Activated T-helper 2 cell treated with anti-CD3 and anti-CD28 coated beads, Interferon-gamma antibody, Interleukin-2, Interleukin-4, amounts not matched to agents 10 μg/mL and 5 μg/mL and 100 μg/mL, durations not matched to agents 14 hours and 24 hours and 36 hours (primary cell): ENCODE measurements at regions of chr9 and their contacts with region 1.

Region 1: DNA sequence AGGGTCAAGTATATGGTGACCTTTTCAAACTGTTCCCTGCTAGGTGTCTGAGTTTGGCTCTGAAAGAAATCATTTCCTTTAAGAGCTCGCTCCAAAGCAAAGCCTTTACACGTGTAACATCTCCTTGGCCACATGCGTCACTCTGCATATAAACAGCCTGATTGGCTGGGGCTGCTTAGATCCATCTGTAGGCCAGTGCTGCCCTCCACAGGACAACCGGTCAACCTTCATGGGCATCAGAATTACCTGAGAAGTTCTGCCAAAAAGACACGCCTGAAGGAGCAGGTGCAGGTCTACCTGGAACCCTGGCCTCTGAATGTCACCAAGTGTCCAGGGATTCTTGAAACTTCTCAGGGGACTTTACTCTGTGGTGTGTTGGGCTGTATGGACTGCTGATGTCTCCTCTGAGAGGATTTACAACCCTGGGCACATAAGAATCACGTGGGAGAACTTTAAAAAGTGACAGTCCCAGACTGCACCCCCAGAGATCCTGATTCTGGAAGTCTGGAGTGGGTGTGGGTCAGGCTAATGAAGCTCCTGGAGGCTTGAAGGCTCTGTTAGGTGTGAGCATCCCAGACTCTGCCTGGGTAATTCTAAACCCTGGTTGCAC is 497.6 kb downstream of the GADD45G start:
- DNase-seq: peak; percentile 75
- H3K4me3 Mint-ChIP-seq: no peak overlapping the region
- H3K27ac Mint-ChIP-seq: no peak overlapping the region
- H3K4me1 Mint-ChIP-seq: peaks cover 11% of the 10 kb centered on the region
- H3K27me3 Mint-ChIP-seq: peaks cover 3% of the 10 kb centered on the region

Region 2: DNA sequence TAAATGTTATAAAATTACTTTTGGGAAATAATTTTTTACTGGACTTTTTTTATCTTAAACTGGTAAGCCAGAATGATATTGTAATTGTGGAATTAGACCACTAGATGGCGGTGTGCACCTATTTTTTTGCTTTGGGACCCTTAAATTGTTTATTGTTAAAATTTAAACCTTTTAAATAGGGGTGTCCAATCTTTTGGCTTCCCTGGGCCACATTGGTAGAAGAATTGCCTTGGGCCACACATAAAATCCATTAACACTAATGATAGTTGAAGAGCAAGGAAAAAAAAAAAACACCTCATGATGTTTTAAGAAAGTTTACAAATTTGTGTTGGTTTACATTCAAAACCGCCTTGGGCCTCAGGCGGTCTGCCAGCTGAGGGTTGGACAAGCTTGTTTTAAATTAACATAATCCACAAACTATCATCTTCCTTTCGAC is 526.0 kb before region 1 on chr9:
- intact Hi-C with region 1: loop called (anchors 5 kb)
- DNase-seq: no peak
- H3K4me3 Mint-ChIP-seq: no peak overlapping the region
- H3K27ac Mint-ChIP-seq: no peak overlapping the region
- H3K4me1 Mint-ChIP-seq: peaks cover 15% of the 10 kb centered on the region
- H3K27me3 Mint-ChIP-seq: peaks cover 58% of the 10 kb centered on the region

Region 3: DNA sequence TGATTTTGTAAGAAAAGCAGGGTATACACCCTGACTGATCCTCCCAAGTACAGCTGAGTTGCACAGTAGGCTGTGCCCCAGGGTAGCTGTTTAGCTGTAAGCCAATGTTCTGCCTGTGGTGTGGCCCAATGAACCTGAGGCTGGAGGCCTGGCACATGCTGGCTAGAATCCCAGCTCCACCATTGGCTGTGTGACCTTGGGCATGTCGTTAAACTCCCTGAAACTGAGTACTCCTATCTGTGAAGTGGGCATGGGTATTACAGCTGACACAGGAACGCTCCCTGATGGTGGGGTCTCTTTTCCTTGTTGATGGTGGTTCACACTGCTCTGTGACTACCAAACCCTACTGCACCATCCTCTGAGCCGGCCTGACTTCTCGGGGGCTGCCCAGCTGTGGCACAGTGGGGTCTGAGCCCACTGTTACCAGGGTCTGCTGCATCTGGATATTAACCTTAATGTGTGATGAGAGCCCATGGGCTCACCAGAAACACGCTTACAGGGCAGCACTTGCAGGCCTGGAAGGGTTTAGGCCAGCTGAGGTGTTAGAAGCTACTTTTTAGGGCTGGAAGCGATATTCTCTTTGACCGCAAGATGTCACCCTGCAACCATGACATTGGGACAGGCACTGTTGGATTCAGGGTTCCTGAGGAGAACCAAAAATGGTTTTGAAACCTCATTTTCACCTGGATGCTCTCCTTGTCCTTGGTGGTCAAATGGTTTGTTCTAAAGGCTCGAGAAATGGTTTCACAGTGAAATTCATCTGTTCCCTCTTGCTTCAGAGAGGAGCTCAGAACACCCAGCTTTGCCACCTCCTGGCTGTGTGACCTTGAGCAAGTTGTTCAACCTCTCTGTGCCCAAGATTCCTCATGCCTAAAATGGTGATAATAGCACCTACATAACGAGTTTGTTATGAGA is 504.4 kb before region 1 on chr9:
- intact Hi-C with region 1: loop called (anchors 1 kb)
- DNase-seq: peak; percentile 44
- H3K4me3 Mint-ChIP-seq: no peak overlapping the region
- H3K27ac Mint-ChIP-seq: no peak overlapping the region
- H3K4me1 Mint-ChIP-seq: peaks cover 3% of the 10 kb centered on the region
- H3K27me3 Mint-ChIP-seq: peaks cover 37% of the 10 kb centered on the region

Region 4: DNA sequence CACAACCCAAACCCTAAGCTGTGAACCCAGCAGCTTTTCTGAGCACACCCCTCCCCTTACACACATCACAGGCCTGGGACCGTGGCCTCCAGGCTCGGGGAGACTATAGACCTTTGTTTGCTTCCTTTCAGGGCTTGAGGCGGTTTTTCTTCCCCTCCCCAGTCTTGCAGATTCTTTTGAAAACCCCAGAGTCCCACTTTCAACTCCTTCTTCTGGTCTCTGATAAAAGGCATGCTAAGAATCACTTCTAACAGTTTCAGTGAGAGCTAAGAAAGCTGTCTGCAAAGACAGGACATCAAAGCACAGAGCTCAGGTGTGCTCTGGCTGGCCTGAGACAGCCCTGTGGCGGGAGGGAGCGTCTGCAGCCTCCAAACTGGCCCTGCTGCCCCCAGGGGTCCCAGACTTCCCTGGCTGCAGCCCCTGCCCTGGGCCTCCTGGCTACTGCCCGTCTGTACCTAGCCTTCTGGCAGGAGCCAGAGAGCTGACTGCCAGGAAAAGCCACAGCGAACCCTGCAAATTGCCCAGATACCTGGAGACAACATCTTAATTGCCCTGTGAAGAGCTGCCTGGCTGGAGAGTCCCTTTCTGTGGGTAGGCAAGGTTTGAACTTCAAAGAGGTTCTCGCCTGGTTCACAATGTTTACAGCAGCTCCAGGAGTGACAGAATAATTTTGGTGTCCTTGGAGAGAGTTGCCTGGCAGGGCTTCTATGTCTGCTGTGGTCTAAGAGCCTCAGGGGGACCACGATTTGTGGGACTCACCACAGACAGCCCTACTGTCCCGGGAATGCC is 358.6 kb before region 1 on chr9:
- intact Hi-C with region 1: loop called (anchors 5 kb)
- DNase-seq: peak; percentile 73
- H3K4me3 Mint-ChIP-seq: peak overlapping the region; percentile 6
- H3K27ac Mint-ChIP-seq: peak overlapping the region; percentile 97
- H3K4me1 Mint-ChIP-seq: peaks cover 76% of the 10 kb centered on the region
- H3K27me3 Mint-ChIP-seq: no peaks in the 10 kb centered on the region

Region 5: DNA sequence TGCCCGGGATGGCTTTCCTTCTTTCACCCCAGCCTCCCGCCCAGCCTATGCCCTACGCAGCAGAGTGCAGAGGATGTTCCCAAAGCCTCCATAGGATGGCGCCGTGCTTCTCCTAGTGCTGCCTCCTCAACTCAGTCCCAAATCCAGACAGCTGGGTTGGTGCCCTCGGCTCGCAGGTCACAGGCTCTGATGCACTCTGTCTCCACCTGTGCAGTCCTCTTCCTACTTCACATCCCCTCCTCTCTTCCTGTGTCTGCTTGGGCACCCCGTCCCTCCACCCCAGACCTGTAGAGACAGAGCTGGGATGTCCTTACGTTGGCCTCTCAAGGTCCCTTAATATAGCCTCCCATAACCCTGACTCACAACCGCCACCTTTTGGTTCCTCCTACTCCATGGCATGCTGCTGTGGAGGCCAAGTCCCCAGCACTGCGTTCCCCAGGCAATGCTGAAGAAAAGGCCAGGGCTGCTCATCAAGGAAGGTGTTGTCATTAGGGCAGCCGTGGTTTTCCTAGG is 183.2 kb before region 1 on chr9:
- intact Hi-C with region 1: loop called (anchors 5 kb)
- DNase-seq: peak; percentile 31
- H3K4me3 Mint-ChIP-seq: peak overlapping the region; percentile 46
- H3K27ac Mint-ChIP-seq: peak overlapping the region; percentile 68
- H3K4me1 Mint-ChIP-seq: peaks cover 54% of the 10 kb centered on the region
- H3K27me3 Mint-ChIP-seq: peaks cover 1% of the 10 kb centered on the region

Region 6: GRCh38 chr9:89999534-90000370 is 102.6 kb before region 1 on chr9:
- intact Hi-C with region 1: loop called (anchors 5 kb)
- DNase-seq: peak; percentile 55
- H3K4me3 Mint-ChIP-seq: peak overlapping the region; percentile 41
- H3K27ac Mint-ChIP-seq: peak overlapping the region; percentile 67
- H3K4me1 Mint-ChIP-seq: peaks cover 36% of the 10 kb centered on the region
- H3K27me3 Mint-ChIP-seq: peaks cover 5% of the 10 kb centered on the region